Heart left ventricle (tissue), 16 donors: ENCODE measurements at regions of chrX and their contacts with region 1.

Region 1: DNA sequence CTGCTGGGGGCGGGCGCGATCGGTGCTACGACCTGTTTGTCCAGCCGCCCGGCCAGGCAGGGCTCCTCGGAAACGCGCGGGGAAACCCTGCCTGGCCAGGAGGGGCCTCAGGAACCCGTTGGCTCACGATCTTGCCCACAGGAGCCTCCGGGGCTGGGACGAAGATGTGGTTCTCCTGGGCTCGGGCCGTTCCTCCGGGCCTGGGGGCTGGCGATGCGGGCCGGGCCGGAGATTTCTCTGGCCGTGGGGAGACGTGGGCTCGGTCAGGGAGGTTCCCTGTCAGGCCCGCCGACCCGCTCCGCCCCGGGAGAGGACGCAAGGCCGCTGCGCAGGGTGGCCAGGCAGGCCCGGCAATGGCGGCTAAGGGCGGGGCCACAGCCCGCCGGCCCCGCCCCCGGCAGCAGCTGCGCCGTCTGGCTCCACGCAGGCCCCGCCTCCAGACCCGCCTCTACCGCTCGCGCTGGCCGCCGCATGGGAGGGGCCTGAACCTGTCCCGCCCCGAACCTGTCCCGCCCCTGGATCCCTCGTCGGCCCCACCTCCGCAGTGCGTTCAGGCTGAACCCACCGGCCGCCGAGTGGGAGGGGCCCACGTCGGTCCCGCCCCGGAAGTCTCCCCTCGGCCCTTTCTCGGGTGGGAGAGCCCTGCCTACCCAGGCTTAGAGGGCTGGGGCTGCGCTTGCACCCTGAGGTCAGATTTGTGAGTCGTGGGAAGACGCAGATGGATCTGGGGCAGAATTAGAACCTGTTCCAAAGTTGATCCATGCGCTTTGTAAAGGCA is at the start of gene FAM3A:
- DNase-seq: peak; percentile 94 to 97 (median 95)
- ATAC-seq: peak; percentile 94 to 97 (median 97)
- H3K4me3 ChIP-seq: peak within 1 kb of the TSS; percentile 59 to 97 (median 76)
- H3K27ac ChIP-seq: peak within 1 kb of the TSS; percentile 89 to 98 (median 93)
- H3K4me1 ChIP-seq: peaks cover 0 to 28% (median 10%) of the 10 kb centered on the region in 12 donors
- H3K27me3 ChIP-seq: peaks cover 0 to 5% (median 0%) of the 10 kb centered on the region in 9 donors
- CTCF ChIP-seq: no peak
- POLR2A ChIP-seq: peak; percentile 82 to 94
- total RNA-seq, gene FAM3A: 36.2 to 82.6 (median 48.6) TPM

Region 2: DNA sequence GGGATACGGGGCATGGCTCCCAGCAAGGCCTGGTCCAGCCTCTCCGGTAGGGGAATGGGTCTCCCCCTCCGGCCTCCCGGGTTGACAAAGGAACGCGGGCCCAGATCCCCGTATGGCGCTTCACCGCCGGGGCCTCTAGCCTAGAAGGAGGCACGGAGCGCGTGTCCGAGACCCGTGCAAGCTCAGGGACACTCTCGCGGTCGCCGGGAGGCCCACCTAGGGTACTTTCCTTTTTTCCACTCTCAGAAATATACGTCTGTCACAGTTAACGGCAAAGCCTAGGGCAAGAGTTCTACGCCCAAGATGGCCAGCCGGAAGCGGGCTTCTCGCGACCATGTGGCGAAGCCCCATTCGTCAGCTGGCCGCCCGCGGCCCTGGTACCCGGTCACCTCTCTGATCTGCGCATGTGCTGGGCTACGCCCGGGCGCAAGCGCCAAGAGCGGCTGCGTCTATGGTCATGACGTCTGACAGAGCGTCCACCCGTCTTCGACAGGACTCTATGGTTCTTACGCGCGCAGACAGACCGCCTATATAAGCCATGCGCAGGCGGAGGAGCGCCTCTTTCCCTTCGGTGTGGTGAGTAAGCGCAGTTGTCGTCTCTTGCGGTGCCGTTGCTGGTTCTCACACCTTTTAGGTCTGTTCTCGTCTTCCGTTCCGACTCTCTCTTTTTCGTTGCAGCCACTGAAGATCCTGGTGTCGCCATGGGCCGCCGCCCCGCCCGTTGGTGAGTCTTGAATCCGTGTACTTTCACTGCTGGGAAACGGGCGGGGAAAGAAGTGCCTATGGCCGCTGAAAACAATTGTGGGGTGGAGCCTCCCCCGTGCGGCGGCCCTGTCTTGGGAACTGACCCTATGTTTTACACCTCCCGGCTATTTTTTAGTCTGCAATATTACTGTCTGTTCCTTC is 118.0 kb before region 1 on chrX and contains the start of gene RPL10:
- intact Hi-C with region 1: loop called in 1 of 10 experiments (anchors 5 kb)
- DNase-seq: peak; percentile 92 to 97 (median 96)
- ATAC-seq: peak; percentile 87 to 97 (median 92)
- H3K4me3 ChIP-seq: peak within 1 kb of the TSS; percentile 67 to 99 (median 86)
- H3K27ac ChIP-seq: peak within 1 kb of the TSS; percentile 98 to 100 (median 98)
- H3K4me1 ChIP-seq: peaks cover 0 to 16% (median 10%) of the 10 kb centered on the region in 12 donors
- H3K27me3 ChIP-seq: no peaks in the 10 kb centered on the region
- CTCF ChIP-seq: no peak
- POLR2A ChIP-seq: peak in 1 of 2 donors; percentile 91
- total RNA-seq, gene RPL10: 1,381 to 3,072 (median 2,052) TPM

Region 3: GRCh38 chrX:154595559-154595958 is 79.5 kb after region 1 on chrX:
- intact Hi-C with region 1: no loop called
- DNase-seq: no peak
- ATAC-seq: no peak
- H3K4me3 ChIP-seq: no peak overlapping the region
- H3K27ac ChIP-seq: no peak overlapping the region
- H3K4me1 ChIP-seq: no peaks in the 10 kb centered on the region
- H3K27me3 ChIP-seq: peaks cover 0 to 7% (median 0%) of the 10 kb centered on the region in 9 donors
- CTCF ChIP-seq: no peak
- POLR2A ChIP-seq: no peak